ENCODE measurements at regions of chr4 and their contacts with region 1.

Region 1: DNA sequence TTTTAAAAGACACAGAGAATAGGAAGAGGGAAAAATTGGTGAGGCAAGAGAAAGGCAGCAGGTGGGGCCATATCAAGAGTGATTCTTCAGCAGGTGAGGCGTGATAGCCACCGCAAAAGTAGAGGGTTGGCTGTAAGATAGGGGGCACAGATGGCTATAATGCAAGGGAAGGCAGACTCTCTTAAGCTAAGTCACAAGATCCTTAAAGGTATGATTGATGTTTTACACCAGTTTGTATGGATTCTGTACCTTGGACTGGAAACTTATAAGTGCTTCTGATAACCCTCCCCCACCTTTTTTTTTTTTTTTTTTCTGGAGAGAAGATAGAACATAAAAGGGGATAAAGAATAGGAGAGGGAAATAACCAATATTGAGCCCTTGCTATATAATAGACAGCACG is 40.0 kb downstream of the NSUN7 start:
- H3K4me3 Mint-ChIP-seq: no peak overlapping the region
- H3K27ac Mint-ChIP-seq: peak overlapping the region; percentile 80
- H3K4me1 Mint-ChIP-seq: peaks cover 30% of the 10 kb centered on the region
- H3K27me3 Mint-ChIP-seq: peaks cover 2% of the 10 kb centered on the region

Region 2: DNA sequence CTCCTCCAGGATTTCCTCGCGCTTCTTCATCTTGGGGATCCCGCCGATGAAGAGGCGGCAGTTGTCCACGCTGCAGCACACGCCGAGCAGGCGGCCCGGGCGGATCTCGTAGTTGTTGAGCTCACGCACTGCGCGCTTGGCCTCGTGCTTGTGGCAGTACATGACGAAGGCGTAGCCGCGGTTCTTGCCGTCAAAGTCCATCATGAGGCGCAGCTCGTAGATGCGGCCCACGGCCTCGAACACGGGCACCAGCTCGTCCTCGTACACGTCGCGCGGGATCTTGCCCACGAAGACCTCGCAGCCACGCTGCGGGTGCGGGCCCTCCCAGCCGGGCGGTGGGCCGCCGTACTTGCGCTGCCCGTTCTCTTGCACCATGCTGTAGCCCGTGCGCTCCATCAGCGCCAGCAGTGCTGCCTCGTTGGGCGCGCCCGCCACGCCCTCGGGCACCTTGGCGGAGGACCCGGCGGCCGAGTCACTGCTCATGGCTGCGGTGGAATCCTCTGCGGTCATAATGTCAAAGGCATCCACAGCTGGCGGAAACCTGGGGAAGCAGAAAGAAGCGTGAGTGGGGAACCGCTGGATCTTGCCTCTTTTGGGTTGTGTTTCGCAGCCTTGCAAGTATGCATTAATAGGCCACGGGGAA is 351.3 kb before region 1 on chr4:
- intact Hi-C with region 1: no loop called
- H3K4me3 Mint-ChIP-seq: no peak overlapping the region
- H3K27ac Mint-ChIP-seq: peak overlapping the region; percentile 25
- H3K4me1 Mint-ChIP-seq: peaks cover 23% of the 10 kb centered on the region
- H3K27me3 Mint-ChIP-seq: no peaks in the 10 kb centered on the region

Region 3: DNA sequence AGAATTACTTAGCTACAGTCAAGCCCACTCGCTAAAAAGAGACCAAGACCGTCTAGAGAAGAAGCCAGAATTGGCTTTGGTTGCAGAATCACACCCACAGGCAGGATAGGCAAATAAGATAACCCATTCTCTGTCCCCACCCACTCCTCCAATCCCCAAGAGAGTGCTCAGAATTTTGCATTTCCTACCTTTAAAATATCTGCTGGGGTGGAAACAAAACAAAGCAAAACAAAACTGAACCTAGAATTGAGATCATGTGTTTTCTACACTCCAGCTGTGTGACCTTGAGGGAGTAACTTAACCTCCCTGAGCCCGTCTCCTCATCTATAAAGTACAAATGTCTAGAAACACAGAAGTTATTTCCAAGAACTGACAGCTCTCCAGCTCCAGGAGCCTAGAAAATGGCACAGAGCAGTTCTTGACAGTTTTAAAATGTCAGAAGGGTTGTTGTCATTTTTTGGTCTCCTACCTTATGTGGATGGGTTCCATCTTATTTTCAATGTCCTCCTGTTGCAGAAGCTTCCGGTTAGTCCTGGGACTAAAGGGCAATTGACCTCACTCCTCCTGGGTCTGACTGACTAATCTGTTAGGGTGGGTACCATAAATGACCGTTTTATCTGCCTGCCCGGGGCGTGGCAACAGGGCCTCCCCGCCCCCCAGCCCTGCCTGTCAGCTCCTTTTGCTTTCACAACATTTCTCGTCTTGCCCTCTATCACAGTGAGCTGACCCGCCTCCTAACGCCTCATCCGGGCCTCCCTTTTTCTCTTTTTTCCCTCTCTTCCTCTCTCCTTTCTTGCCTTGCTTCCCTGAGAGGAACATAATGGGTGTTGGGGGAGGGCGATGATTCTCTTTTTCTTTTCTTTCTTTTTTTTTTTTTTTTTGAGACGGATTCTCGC is 274.1 kb before region 1 on chr4:
- intact Hi-C with region 1: no loop called
- H3K4me3 Mint-ChIP-seq: no peak overlapping the region
- H3K27ac Mint-ChIP-seq: peak overlapping the region; percentile 49
- H3K4me1 Mint-ChIP-seq: peaks cover 48% of the 10 kb centered on the region
- H3K27me3 Mint-ChIP-seq: no peaks in the 10 kb centered on the region

Region 4: DNA sequence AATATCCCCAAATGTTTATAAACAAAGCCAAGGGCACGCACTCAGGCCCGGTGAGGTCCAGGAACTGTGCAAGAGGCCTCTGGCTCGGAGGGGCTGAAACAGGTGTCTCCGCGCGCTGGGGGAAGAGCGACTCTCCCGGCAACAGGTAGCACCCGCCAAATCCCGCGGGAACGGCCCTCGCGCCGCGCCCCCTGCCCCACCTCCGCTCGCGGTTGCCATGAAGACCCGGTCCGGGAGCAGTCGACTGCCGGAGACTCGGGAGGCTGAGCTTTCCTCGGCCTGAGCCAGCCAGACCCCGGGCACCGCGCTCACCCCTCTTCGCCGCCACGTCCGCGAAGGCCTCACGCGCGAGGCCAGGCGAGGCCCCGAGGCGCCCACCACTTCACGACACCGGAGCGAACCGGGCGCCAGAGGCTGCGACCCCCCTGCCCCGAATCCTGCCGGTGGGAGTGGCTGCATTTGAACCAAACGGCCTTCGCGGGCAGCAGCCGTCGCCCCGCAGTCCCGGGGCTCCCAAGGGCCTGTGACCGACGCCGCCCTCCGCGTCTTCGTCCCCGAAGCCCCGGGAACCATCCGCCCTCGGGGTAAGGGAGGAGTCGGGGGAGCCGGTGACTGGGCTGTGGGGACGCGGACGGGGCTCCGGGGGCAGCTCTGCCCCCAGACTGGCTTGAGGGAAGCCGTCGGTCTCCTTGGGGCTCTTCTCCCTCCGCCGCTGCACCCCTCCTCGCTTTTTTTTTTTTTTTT is 39.9 kb before region 1 on chr4 and contains the start of gene NSUN7:
- intact Hi-C with region 1: loop called (anchors 10 kb)
- H3K4me3 Mint-ChIP-seq: peak within 1 kb of the TSS; percentile 73
- H3K27ac Mint-ChIP-seq: peak within 1 kb of the TSS; percentile 71
- H3K4me1 Mint-ChIP-seq: peaks cover 14% of the 10 kb centered on the region
- H3K27me3 Mint-ChIP-seq: peaks cover 30% of the 10 kb centered on the region

Region 5: GRCh38 chr4:40948014-40948413 is 158.2 kb after region 1 on chr4:
- intact Hi-C with region 1: no loop called
- H3K4me3 Mint-ChIP-seq: no peak overlapping the region
- H3K27ac Mint-ChIP-seq: no peak overlapping the region
- H3K4me1 Mint-ChIP-seq: peaks cover 17% of the 10 kb centered on the region
- H3K27me3 Mint-ChIP-seq: no peaks in the 10 kb centered on the region